Heart left ventricle (tissue), 16 donors: ENCODE measurements at regions of chr13 and their contacts with region 1.

Region 1: DNA sequence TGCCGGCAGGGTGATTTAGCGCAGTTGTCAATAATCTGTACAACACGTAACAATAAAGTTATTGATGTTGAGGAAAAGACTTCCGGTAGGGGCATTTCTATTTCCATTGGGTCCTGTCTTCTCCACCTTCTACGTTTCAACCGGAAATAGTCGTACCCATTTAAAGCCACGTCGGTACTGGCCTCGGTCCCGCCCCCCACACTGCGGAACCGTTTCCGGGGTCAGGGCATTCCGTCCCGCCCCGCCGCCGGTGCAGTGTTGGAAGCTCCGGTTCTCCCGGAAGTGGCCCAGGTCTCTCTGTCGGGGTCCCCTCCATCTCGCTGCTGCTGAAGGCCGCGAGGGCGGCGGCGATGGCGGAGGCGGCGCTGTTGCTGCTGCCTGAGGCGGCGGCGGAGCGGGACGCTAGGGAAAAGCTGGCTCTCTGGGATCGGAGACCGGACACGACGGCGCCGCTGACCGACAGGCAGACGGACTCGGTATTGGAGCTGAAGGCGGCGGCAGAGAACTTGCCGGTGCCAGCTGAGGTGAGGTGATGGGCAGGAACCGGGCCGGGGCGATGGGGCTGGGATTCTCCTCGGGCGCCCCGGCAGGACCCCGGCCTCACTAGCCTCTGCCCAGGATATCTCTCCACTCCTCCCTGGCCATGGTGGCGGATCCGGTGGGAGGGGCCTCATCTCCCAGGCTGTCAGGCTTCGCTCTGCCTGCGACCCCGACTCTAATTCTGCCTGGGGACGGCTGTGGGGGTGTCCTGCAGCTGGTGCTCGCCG is at the start of gene COG3:
- DNase-seq: peak; percentile 94 to 96 (median 96)
- ATAC-seq: peak; percentile 98 to 99 (median 99)
- H3K4me3 ChIP-seq: peak within 1 kb of the TSS; percentile 76 to 94 (median 87)
- H3K27ac ChIP-seq: peak within 1 kb of the TSS; percentile 81 to 95 (median 94)
- H3K4me1 ChIP-seq: peaks cover 0 to 53% (median 34%) of the 10 kb centered on the region in 12 donors
- H3K27me3 ChIP-seq: no peaks in the 10 kb centered on the region
- CTCF ChIP-seq: peak in 5 of 12 donors; percentile 19 to 54 (median 44)
- POLR2A ChIP-seq: peak in 1 of 2 donors; percentile 57
- total RNA-seq, gene COG3: 12.6 to 23.1 (median 15.5) TPM

Region 2: GRCh38 chr13:45412274-45413049 is 52.4 kb before region 1 on chr13:
- intact Hi-C with region 1: loop called in 6 of 10 experiments (anchors 2 to 5 kb)
- DNase-seq: peak in 1 of 5 donors; percentile 38
- ATAC-seq: peak; percentile 70 to 83 (median 78)
- H3K4me3 ChIP-seq: no peak overlapping the region
- H3K27ac ChIP-seq: peak overlapping the region in 11 of 12 donors; percentile 54 to 96 (median 79)
- H3K4me1 ChIP-seq: peaks cover 3 to 56% (median 34%) of the 10 kb centered on the region in 12 donors
- H3K27me3 ChIP-seq: no peaks in the 10 kb centered on the region
- CTCF ChIP-seq: no peak
- POLR2A ChIP-seq: peak in 1 of 2 donors; percentile 28

Region 3: DNA sequence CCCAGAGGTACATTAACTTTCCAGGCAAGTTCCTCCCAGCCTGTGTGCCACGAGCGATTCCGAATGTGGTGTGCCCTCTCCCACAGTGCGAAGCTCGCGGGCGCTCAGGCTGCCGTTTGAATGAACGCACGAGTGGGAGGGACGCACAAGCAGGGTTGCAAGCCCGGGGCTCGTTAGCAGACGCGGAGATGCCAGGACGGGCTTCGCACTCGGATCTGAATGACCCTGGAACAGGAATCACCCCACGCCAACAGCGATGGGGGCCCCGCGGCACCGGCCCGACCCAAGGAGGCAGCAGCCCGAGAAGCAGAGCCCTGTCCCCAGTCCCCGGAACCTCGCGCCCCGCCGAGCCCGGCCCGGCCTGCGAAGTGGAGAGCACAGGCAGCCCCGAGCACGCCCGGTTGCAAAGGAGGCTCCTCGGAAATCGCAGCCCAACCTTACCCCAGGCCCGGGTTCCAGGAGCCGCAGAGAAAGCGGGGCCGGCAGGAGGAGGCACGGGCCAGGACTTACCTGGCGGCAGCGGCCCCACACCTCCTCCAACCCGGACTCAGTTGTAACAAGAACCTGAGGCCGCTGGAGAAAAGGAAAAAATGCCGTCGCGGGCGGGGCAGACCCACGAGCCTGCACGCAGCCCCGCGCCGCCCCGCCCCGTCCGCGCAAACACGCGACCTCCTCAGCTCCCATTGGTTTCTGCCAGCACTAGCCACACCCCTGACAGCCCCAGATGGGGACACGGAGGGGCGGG is 46.9 kb before region 1 on chr13 and contains the start of gene SLC25A30:
- intact Hi-C with region 1: loop called in 6 of 10 experiments (anchors 2 to 5 kb)
- DNase-seq: peak; percentile 95 to 98 (median 97)
- ATAC-seq: peak; percentile 98
- H3K4me3 ChIP-seq: peak within 1 kb of the TSS; percentile 55 to 95 (median 82)
- H3K27ac ChIP-seq: peak within 1 kb of the TSS; percentile 72 to 96 (median 92)
- H3K4me1 ChIP-seq: peaks cover 3 to 40% (median 25%) of the 10 kb centered on the region in 12 donors
- H3K27me3 ChIP-seq: no peaks in the 10 kb centered on the region
- CTCF ChIP-seq: no peak
- POLR2A ChIP-seq: peak in 1 of 2 donors; percentile 89
- total RNA-seq, gene SLC25A30: 56.9 to 208 (median 128) TPM